CD4-positive, alpha-beta T cell (primary cell): ENCODE measurements at regions of chr18 and their contacts with region 1.

Region 1: GRCh38 chr18:24600076-24600654 is 139.7 kb downstream of the HRH4 start:
- DNase-seq: peak in 4 of 14 experiments; percentile 4 to 52 (median 36)
- ATAC-seq: no peak
- H3K4me3 ChIP-seq: no peak overlapping the region
- H3K4me3 Mint-ChIP-seq: no peak overlapping the region
- H3K27ac ChIP-seq: no peak overlapping the region
- H3K27ac Mint-ChIP-seq: no peak overlapping the region
- H3K4me1 ChIP-seq: no peaks in the 10 kb centered on the region
- H3K4me1 Mint-ChIP-seq: no peaks in the 10 kb centered on the region
- H3K27me3 ChIP-seq: peaks cover 0 to 4% of the 10 kb centered on the region in 2 experiments
- H3K27me3 Mint-ChIP-seq: peaks cover 18% of the 10 kb centered on the region
- CTCF ChIP-seq: peak; percentile 50

Region 2: DNA sequence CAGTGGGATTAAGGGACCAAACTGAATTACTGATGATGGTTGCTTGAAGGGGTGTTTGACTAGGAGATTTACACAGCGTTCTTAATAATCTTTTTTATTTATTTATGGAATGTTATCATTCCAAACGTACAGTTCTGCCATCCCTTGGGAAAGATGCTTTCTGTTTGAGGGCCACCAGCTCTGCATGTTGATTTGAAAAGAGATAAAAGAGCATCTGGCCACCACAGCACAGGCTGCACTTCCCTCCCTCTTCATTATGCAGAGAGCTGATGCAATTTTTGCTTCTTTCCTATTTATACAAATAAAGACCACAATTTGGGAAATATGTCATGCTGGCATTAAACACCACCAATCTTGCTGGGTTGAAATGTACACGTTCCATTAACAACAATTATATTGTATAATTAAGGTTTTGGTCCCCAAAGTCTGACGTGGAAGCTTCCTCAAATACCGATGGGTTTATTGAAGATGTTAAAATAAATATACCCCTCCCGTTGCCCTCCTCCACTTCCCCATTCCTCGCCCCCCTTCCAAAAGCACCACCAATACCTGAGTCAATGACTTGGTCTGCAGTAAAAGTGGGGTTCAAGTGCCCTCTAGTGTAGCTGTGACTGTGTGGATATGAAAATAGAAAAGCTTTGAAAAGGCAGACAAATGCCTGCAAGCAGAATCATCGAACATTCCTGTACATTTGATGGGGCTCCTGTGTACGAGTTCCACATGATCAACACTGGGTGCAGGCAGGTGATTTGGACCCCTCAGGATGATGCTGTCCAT is 72.2 kb after region 1 on chr18:
- CTCF ChIA-PET with region 1: no interaction called
- POLR2A ChIA-PET with region 1: no interaction called
- intact Hi-C with region 1: loop called (anchors 1 to 5 kb)
- DNase-seq: peak in 4 of 14 experiments; percentile 4 to 26 (median 10)
- ATAC-seq: no peak
- H3K4me3 ChIP-seq: no peak overlapping the region
- H3K4me3 Mint-ChIP-seq: no peak overlapping the region
- H3K27ac ChIP-seq: no peak overlapping the region
- H3K27ac Mint-ChIP-seq: no peak overlapping the region
- H3K4me1 ChIP-seq: no peaks in the 10 kb centered on the region
- H3K4me1 Mint-ChIP-seq: no peaks in the 10 kb centered on the region
- H3K27me3 ChIP-seq: no peaks in the 10 kb centered on the region
- H3K27me3 Mint-ChIP-seq: peaks cover 16% of the 10 kb centered on the region
- CTCF ChIP-seq: no peak

Region 3: DNA sequence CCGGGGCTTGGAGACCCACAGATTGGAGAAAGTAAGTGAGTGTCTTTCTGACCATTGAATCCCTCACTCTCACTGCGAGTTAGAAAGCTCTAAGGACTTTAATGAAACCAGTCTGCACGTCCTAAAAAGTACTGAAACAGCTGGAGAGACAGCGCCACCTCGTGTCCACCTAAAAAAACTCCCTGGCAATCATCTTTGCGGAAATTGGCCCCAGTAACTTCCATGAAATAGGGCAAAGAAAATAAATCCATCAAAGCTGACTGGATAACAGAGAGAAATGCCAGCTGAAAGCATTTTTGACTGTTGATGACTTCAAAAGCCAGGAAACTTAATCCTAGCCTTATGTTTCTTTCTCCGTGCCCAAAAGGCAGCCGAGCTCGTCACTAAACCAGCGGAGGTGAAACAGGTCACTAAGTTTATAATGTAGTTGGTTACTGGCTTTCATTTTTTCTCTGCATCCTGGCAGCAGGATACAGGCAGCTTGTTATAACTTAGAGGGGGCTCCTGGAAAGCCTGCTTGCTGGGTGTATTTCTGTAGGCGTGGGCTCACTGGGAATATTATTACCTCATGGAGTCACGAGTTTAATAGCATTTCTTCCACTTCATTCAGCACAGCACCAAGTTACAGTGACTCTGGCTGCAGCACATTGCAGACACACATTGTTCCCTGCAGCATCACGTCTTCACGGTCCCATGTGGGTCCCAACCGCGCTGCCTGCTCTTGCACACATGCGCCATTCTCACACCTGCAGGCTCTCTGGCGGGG is 126.7 kb after region 1 on chr18:
- CTCF ChIA-PET with region 1: interaction called, 3 read pairs
- POLR2A ChIA-PET with region 1: no interaction called
- intact Hi-C with region 1: loop called (anchors 1 to 2 kb)
- DNase-seq: peak; percentile 17 to 74 (median 36)
- ATAC-seq: no peak
- H3K4me3 ChIP-seq: no peak overlapping the region
- H3K4me3 Mint-ChIP-seq: no peak overlapping the region
- H3K27ac ChIP-seq: no peak overlapping the region
- H3K27ac Mint-ChIP-seq: no peak overlapping the region
- H3K4me1 ChIP-seq: no peaks in the 10 kb centered on the region
- H3K4me1 Mint-ChIP-seq: no peaks in the 10 kb centered on the region
- H3K27me3 ChIP-seq: peaks cover 4 to 5% of the 10 kb centered on the region in 2 experiments
- H3K27me3 Mint-ChIP-seq: peaks cover 3% of the 10 kb centered on the region
- CTCF ChIP-seq: peak; percentile 71

Region 4: DNA sequence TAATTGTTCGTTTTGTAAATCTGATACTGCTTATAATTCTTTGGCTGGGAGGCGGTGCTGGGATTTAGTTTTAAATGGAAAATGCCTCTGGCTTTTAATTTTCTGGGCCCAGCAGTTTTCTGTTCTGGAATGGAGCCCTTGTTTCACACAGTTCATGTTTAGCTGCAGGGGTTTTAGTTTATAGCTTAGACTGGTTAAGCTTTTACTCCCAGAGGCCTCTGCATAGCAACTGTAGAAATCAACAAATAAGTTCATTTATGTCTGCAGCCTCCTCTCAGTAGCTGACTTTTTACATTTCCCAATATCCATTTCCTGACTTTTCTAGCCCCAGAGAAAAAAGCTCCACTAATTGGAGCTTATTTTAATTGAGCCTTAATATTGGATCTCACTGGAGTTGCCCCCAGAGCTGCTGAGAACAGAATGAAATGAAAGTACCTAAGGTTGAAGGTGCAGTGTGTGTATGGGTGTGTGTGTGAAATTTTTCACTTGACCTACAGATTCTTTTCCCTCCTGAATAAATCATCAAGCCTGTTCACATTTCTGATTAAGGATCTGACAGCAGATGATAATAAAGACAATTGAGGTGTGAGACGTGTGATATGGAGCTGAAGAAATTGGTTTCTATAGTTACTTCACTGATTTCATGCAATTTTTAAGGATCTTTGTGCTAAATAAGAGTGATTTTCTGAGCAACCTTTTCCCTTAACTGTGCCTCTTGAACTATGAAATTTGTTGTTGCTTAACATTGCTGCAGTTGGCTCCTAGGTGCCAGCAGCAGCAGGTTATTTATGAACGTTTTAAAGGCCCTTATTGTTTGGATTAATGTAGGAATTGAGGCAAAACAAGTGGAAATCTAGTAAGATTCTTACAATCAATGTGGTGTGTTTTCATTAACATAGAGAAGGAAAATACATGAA is 1735.7 kb after region 1 on chr18:
- CTCF ChIA-PET with region 1: no interaction called
- POLR2A ChIA-PET with region 1: no interaction called
- intact Hi-C with region 1: loop called in 1 of 2 experiments (anchors 5 kb)
- DNase-seq: no peak
- ATAC-seq: no peak
- H3K4me3 ChIP-seq: no peak overlapping the region
- H3K4me3 Mint-ChIP-seq: no peak overlapping the region
- H3K27ac ChIP-seq: no peak overlapping the region
- H3K27ac Mint-ChIP-seq: no peak overlapping the region
- H3K4me1 ChIP-seq: no peaks in the 10 kb centered on the region
- H3K4me1 Mint-ChIP-seq: peaks cover 10% of the 10 kb centered on the region
- H3K27me3 ChIP-seq: no peaks in the 10 kb centered on the region
- H3K27me3 Mint-ChIP-seq: no peaks in the 10 kb centered on the region
- CTCF ChIP-seq: no peak